ENCODE measurements at regions of chr7 and their contacts with region 1.

Region 1: DNA sequence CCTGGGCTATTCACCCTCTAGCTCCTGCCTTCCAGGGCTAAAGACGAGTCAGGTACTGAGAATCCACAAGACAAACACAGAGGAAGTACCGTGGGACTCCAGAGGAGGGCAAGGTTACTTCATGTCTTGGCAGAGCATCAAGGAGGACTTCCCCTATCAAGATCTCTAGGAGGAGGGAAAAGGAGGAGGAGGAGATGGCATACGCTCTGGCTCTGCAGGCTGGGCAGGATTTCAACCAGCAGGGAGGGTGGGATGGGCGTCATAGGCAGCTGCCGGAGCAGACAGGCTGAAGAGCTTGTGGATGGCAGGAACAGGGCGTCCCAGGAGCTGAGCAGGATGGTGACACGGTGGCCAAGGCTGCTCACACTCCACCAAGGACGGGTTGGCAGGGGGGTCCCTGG is 21.3 kb downstream of the MDH2 start:
- DNase-seq: peak; percentile 93
- H3K4me3 ChIP-seq: no peak overlapping the region
- H3K27ac ChIP-seq: no peak overlapping the region
- H3K4me1 ChIP-seq: peaks cover 11% of the 10 kb centered on the region
- H3K27me3 ChIP-seq: no peaks in the 10 kb centered on the region
- CTCF ChIP-seq: peak; percentile 52 to 76

Region 2: GRCh38 chr7:76054128-76055120 is 14.8 kb before region 1 on chr7:
- CTCF ChIA-PET with region 1: no interaction called
- dilution Hi-C with region 1: no loop called
- in situ Hi-C with region 1: no loop called
- intact Hi-C with region 1: loop called (anchors 2 kb)
- DNase-seq: peak; percentile 91
- H3K4me3 ChIP-seq: no peak overlapping the region
- H3K27ac ChIP-seq: no peak overlapping the region
- H3K4me1 ChIP-seq: peaks cover 17% of the 10 kb centered on the region
- H3K27me3 ChIP-seq: no peaks in the 10 kb centered on the region
- CTCF ChIP-seq: no peak

Region 3: DNA sequence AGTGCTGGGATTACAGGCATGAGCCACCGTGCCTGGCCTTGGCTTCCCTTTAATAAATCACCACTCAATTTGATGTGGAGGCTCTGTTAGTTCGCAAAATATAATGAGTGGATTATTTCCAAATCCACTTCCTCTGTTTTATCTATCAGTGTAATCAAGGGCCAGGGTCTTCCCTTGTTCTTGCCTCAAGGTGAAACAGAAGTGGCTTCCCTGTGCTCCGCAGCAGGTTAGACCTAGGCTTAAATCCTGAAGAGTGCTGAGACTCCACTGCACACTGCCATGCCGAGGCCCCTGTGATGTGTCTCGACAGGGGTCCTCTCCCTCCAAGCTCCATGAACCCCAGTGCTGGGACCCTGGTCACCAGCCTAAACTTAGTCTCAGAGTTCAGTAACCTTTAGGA is 37.7 kb after region 1 on chr7:
- CTCF ChIA-PET with region 1: interaction called, 32 read pairs
- dilution Hi-C with region 1: no loop called
- in situ Hi-C with region 1: no loop called
- intact Hi-C with region 1: no loop called
- DNase-seq: no peak
- H3K4me3 ChIP-seq: no peak overlapping the region
- H3K27ac ChIP-seq: no peak overlapping the region
- H3K4me1 ChIP-seq: peaks cover under 1% of the 10 kb centered on the region
- H3K27me3 ChIP-seq: no peaks in the 10 kb centered on the region
- CTCF ChIP-seq: no peak

Region 4: GRCh38 chr7:76179686-76180085 is 110.4 kb after region 1 on chr7:
- CTCF ChIA-PET with region 1: no interaction called
- dilution Hi-C with region 1: no loop called
- in situ Hi-C with region 1: no loop called
- intact Hi-C with region 1: loop called (anchors 1 kb)
- DNase-seq: no peak
- H3K4me3 ChIP-seq: no peak overlapping the region
- H3K27ac ChIP-seq: no peak overlapping the region
- H3K4me1 ChIP-seq: peaks cover 3% of the 10 kb centered on the region
- H3K27me3 ChIP-seq: no peaks in the 10 kb centered on the region
- CTCF ChIP-seq: no peak

Region 5: DNA sequence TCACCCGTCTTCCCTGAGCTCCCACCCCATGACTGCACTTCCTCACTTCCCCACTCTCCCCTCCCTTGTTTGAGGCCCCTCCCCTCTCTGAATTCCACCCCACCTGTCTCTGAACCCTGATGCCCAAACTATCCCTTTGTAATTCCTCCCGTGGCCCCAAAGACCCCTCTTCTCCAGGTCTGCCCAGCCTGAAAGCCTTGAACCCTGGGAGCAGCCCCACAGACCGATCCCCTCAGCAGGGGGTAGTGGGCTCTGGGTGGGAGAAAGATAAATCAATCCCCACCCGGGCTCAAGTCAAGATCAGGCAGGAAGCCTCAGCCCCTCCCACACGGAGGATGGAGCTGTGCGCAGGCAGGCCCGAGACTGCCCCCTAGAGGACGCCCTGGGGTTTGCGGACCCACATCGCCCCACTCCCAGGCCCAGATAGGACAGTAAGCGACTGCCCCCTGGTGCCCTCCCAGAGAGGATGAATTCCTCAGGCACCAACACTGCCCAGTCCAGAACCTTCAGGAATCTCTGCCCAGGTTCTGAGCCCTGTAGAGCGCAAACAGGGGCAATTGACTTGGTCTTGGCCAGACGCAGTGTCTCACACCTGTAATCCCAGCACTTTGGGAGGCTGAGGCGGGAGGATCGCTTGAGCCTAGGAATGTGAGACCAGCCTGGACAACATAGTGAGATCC is 244.9 kb after region 1 on chr7:
- CTCF ChIA-PET with region 1: no interaction called
- dilution Hi-C with region 1: no loop called
- in situ Hi-C with region 1: loop called in 1 of 2 experiments (anchors 25 kb)
- intact Hi-C with region 1: loop called (anchors 1 kb)
- DNase-seq: peak; percentile 79
- H3K4me3 ChIP-seq: no peak overlapping the region
- H3K27ac ChIP-seq: no peak overlapping the region
- H3K4me1 ChIP-seq: peaks cover 24% of the 10 kb centered on the region
- H3K27me3 ChIP-seq: no peaks in the 10 kb centered on the region
- CTCF ChIP-seq: peak; percentile 96 to 100